Activated naive CD4-positive, alpha-beta T cell treated with anti-CD3 and anti-CD28 coated beads for 36 hours (primary cell): ENCODE measurements at regions of chr3 and their contacts with region 1.

Region 1: DNA sequence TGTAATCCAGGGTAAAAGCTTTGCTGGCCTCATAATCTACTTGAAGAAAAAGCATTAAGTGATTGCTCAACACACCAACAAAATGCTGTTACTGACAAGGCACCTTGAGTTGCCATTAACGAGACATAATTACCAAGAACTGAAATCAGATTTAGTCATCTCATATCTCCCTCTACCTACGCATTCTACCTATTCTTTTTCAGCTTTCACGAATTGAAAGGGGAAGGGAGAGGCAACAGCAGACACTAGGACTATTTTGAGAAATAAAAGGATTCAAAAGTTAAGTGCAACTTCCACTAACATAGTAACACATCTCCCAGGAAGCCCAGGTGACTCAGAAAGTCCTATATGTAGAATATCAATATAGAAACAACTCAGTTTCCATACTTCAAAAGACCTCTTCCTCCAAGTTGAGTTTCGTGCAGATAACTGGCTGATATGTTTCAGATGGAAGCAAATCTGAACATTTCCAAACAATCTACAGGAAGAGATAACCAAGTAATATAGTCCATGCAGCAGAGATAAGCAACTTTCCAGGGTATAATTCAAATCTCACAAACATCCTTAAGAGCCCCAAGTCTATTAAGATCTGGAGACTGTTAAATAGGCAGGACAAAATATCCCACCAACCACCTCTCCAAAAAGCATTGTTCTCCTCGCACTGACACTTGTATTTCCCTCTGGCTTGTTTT is 1.9 kb downstream of the OSBPL10 start:
- DNase-seq: peak; percentile 37
- H3K4me3 Mint-ChIP-seq: peak overlapping the region; percentile 78
- H3K27ac Mint-ChIP-seq: peak overlapping the region; percentile 43
- H3K4me1 Mint-ChIP-seq: peaks cover 26% of the 10 kb centered on the region
- H3K27me3 Mint-ChIP-seq: peaks cover 49% of the 10 kb centered on the region

Region 2: DNA sequence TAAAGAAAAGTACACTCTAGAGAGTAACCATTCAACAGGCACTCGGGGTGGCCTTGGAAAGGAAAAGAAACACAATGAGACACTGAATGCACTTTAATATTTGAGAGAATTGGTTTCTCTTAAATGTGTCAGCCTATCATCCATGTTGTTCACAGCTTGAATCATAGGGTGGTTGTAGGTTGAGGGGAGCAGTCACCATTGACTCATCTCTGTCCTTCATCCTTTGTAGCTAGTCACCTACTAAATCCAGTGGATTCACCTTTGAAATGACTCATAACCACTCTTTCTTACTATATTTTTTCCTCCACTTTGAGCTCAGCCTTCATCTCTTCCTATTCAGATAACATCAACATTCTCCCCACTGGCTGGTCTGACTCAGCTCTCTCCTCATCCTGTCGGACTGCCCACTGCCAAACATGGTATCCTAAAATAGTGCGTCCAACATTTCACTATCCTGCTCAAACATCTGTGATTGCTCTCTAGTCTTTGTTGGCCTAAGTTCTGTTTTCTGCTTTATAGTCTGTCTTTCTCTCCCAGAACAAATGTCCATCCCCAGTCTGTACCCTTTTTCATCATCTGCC is 902.0 kb before region 1 on chr3:
- CTCF ChIA-PET with region 1: no interaction called
- intact Hi-C with region 1: loop called (anchors 10 kb)
- DNase-seq: peak; percentile 72
- H3K4me3 Mint-ChIP-seq: no peak overlapping the region
- H3K27ac Mint-ChIP-seq: peak overlapping the region; percentile 4
- H3K4me1 Mint-ChIP-seq: peaks cover 18% of the 10 kb centered on the region
- H3K27me3 Mint-ChIP-seq: no peaks in the 10 kb centered on the region

Region 3: DNA sequence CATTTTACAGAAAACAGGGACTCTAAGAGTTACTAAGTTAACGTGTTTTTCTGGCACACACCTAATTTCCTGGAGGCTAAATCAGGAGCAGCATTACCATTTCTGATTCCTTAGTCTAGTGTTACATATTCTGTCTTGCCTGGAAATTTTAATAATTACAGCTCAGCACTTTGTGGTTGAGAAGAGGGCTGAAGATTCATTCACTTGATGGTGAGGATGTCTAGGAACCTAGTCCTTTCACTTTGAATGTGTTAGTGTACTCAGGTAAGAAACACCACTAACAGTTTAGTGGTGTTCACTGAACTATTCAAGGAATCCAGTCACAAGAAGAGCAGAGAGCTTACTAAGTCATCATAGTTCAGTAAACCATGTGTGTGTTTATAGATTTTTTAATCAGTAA is 343.6 kb before region 1 on chr3:
- CTCF ChIA-PET with region 1: no interaction called
- intact Hi-C with region 1: no loop called
- DNase-seq: no peak
- H3K4me3 Mint-ChIP-seq: no peak overlapping the region
- H3K27ac Mint-ChIP-seq: peak overlapping the region; percentile 81
- H3K4me1 Mint-ChIP-seq: peaks cover 41% of the 10 kb centered on the region
- H3K27me3 Mint-ChIP-seq: no peaks in the 10 kb centered on the region

Region 4: GRCh38 chr3:31925271-31925630 is 53.9 kb before region 1 on chr3:
- CTCF ChIA-PET with region 1: no interaction called
- intact Hi-C with region 1: loop called (anchors 1 kb)
- DNase-seq: peak; percentile 9
- H3K4me3 Mint-ChIP-seq: no peak overlapping the region
- H3K27ac Mint-ChIP-seq: no peak overlapping the region
- H3K4me1 Mint-ChIP-seq: peaks cover 23% of the 10 kb centered on the region
- H3K27me3 Mint-ChIP-seq: no peaks in the 10 kb centered on the region

Region 5: DNA sequence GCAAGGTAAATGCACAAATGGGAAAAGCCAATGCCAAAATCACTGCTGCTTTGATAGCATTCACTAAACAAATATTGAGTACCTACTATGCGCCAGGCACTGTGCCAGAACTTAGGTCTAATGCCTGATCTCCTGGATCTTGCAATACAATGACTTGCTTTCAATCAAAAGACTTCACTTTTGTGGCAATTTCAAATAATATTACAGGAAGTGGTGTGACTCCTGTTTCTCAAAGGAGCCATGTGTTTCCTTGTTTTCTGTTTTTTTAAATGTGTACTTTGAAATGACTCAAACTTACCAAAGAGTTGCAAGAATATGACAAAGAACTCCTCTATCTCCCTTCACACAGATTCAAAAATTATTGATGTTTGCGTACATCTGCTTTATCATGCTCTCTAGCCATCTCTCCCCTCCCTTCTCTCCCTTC is 16.4 kb before region 1 on chr3:
- CTCF ChIA-PET with region 1: no interaction called
- intact Hi-C with region 1: loop called (anchors 1 kb)
- DNase-seq: no peak
- H3K4me3 Mint-ChIP-seq: no peak overlapping the region
- H3K27ac Mint-ChIP-seq: no peak overlapping the region
- H3K4me1 Mint-ChIP-seq: peaks cover 12% of the 10 kb centered on the region
- H3K27me3 Mint-ChIP-seq: peaks cover 6% of the 10 kb centered on the region

Region 6: GRCh38 chr3:32106280-32106928 is 127.3 kb after region 1 on chr3 and contains the start of gene GPD1L:
- CTCF ChIA-PET with region 1: no interaction called
- intact Hi-C with region 1: loop called (anchors 1 kb)
- DNase-seq: peak; percentile 92
- H3K4me3 Mint-ChIP-seq: peak within 1 kb of the TSS; percentile 96
- H3K27ac Mint-ChIP-seq: peak within 1 kb of the TSS; percentile 46
- H3K4me1 Mint-ChIP-seq: peaks cover 30% of the 10 kb centered on the region
- H3K27me3 Mint-ChIP-seq: no peaks in the 10 kb centered on the region
- total RNA-seq, gene GPD1L: 10.8 to 12.6 TPM

Region 7: GRCh38 chr3:32117324-32117723 is 138.2 kb after region 1 on chr3:
- CTCF ChIA-PET with region 1: no interaction called
- intact Hi-C with region 1: loop called (anchors 1 kb)
- DNase-seq: no peak
- H3K4me3 Mint-ChIP-seq: no peak overlapping the region
- H3K27ac Mint-ChIP-seq: no peak overlapping the region
- H3K4me1 Mint-ChIP-seq: peaks cover 61% of the 10 kb centered on the region
- H3K27me3 Mint-ChIP-seq: no peaks in the 10 kb centered on the region

Region 8: GRCh38 chr3:32138545-32139104 is 159.5 kb after region 1 on chr3:
- CTCF ChIA-PET with region 1: no interaction called
- intact Hi-C with region 1: loop called (anchors 1 kb)
- DNase-seq: peak; percentile 69
- H3K4me3 Mint-ChIP-seq: no peak overlapping the region
- H3K27ac Mint-ChIP-seq: peak overlapping the region; percentile 30
- H3K4me1 Mint-ChIP-seq: peaks cover 19% of the 10 kb centered on the region
- H3K27me3 Mint-ChIP-seq: no peaks in the 10 kb centered on the region